AG04449 (cell line): ENCODE measurements at regions of chr17 and their contacts with region 1.

Region 1: DNA sequence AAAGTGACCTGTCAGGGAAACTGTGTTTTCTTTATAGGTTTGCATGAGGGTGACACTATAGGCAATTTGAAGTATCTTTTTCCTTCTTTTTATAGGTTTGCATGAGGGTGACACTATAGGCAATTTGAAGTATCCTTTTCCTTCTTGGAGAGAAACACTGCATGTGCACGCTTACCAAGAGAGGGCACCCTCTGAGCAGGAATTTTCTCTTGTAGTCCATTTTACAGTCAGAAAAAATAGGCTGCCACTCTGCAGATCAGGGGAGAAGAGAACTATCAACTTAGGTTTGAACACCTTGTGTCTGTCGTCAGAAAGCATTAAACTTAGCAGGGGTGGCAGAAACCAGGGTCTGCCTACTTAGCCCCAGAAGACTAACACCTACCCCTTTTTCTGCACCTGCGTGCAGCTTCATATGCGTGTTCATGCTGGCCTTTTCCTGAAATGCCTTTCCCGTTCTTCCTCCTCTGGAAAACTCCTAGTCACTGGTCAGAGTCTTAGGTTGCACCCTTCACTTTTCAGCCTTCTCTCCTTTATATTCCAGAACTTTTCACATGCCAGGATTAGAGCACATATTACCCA is 16.4 kb upstream of the SMIM36 start:
- DNase-seq: no peak
- H3K4me3 ChIP-seq: no peak overlapping the region
- CTCF ChIP-seq: peak; percentile 65

Region 2: GRCh38 chr17:55320594-55321426 is 206.8 kb before region 1 on chr17:
- CTCF ChIA-PET with region 1: no interaction called
- POLR2A ChIA-PET with region 1: no interaction called
- DNase-seq: no peak
- H3K4me3 ChIP-seq: no peak overlapping the region
- CTCF ChIP-seq: no peak

Region 3: GRCh38 chr17:55394357-55395021 is 133.1 kb before region 1 on chr17:
- CTCF ChIA-PET with region 1: no interaction called
- POLR2A ChIA-PET with region 1: no interaction called
- DNase-seq: no peak
- H3K4me3 ChIP-seq: no peak overlapping the region
- CTCF ChIP-seq: no peak

Region 4: GRCh38 chr17:55540414-55541091 is 12.9 kb after region 1 on chr17:
- CTCF ChIA-PET with region 1: interaction called, 18 read pairs
- POLR2A ChIA-PET with region 1: no interaction called
- DNase-seq: no peak
- H3K4me3 ChIP-seq: no peak overlapping the region
- CTCF ChIP-seq: no peak

Region 5: GRCh38 chr17:55584050-55584685 is 56.5 kb after region 1 on chr17:
- CTCF ChIA-PET with region 1: interaction called, 11 read pairs
- POLR2A ChIA-PET with region 1: no interaction called
- DNase-seq: no peak
- H3K4me3 ChIP-seq: no peak overlapping the region
- CTCF ChIP-seq: no peak

Region 6: GRCh38 chr17:55641676-55642081 is 114.0 kb after region 1 on chr17:
- CTCF ChIA-PET with region 1: interaction called, 60 read pairs
- POLR2A ChIA-PET with region 1: no interaction called
- DNase-seq: peak; percentile 12
- H3K4me3 ChIP-seq: no peak overlapping the region
- CTCF ChIP-seq: peak; percentile 62

Region 7: DNA sequence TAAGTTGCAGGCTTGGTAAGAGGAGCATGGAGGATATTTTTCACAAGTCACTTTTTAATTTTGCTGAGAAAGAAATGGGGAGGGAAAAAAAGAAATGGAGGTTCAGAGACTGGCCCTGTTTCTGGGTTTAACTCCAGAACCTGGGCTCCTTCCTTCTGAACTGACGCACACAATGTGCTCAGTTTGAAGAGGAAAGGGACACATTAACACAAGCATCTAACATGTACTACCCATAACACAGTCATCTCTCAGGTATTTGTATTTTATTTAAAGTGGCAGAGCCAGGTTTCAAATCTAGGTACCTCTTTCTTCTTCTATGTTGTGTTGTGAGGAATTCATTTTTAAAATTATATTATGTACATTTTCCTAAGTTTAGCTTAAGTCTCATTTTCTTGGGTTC is 200.3 kb after region 1 on chr17:
- CTCF ChIA-PET with region 1: interaction called, 156 read pairs
- POLR2A ChIA-PET with region 1: no interaction called
- DNase-seq: no peak
- H3K4me3 ChIP-seq: no peak overlapping the region
- CTCF ChIP-seq: no peak

Region 8: GRCh38 chr17:55763851-55764250 is 236.2 kb after region 1 on chr17:
- CTCF ChIA-PET with region 1: interaction called, 199 read pairs
- POLR2A ChIA-PET with region 1: no interaction called
- DNase-seq: no peak
- H3K4me3 ChIP-seq: no peak overlapping the region
- CTCF ChIP-seq: no peak